Ascending aorta (tissue), 2 donors: ENCODE measurements at regions of chr3 and their contacts with region 1.

Region 1: DNA sequence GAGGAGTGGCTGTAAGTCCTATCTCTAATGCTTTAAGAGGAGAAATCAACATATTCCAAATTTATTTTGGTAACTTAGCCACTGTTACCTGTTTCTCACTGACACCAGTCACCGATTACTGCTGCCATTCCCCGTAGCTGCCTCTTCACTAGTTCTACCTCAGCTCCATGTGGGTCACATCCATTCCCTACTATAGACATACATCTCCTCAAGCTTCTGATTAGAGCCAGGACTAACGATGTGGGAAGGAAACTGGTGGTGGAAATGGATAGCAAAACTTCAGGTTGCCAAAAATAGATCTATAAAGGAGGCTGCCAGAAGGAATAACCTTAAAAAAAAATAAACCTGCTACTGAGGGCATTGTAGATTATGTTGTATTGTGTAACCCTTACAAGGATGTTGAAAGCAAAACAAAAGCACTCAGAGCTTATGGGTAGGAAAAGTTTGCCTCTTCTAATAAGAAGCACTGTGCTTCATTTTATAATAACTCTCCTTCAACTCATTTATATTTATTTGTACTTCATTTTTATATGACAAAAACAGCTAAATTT is 56.0 kb downstream of the KAT2B start:
- DNase-seq: no peak
- H3K4me3 ChIP-seq: no peak overlapping the region
- H3K27ac ChIP-seq: peak overlapping the region; percentile 28 to 64
- H3K4me1 ChIP-seq: peaks cover 0 to 18% of the 10 kb centered on the region in 2 donors
- H3K27me3 ChIP-seq: no peaks in the 10 kb centered on the region
- CTCF ChIP-seq: no peak

Region 2: DNA sequence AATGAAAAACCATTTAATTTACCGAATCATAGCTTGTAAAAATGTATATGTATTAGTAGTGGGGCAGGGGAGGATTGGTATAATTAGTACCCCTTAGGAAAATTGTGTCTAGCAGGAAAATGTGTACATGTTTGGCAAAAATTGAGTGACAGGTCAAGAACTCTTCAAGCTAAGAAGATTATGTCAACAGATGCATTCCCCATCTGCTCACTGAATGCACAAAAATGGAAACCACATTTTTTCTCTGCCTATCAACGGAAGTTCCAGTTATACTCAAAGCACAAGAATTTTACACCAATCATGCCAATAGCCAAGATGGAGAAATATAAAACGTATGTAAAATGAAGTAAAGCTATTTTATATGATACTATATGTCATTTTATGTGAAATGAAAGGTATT is 570.1 kb before region 1 on chr3:
- intact Hi-C with region 1: no loop called
- DNase-seq: no peak
- H3K4me3 ChIP-seq: no peak overlapping the region
- H3K27ac ChIP-seq: no peak overlapping the region
- H3K4me1 ChIP-seq: no peaks in the 10 kb centered on the region
- H3K27me3 ChIP-seq: no peaks in the 10 kb centered on the region
- CTCF ChIP-seq: no peak

Region 3: DNA sequence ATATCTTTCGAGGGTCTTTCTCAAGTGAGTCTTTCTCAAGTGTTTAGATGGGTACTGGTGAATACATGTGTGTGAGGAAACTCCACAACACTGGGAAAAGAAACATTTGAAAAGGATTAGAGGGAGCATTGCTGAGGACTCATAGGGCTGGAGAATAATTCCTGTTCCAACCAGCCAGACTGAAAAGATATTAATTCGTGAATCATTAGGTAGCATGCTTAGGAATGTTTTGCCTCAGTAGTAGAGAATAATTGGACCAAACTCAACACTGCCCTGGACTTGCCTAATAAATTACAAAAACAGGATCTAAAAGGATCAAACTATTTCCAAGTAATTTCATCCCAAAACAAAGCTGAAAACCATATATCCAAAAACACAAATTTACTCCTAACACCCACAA is 101.4 kb before region 1 on chr3:
- intact Hi-C with region 1: no loop called
- DNase-seq: no peak
- H3K4me3 ChIP-seq: no peak overlapping the region
- H3K27ac ChIP-seq: no peak overlapping the region
- H3K4me1 ChIP-seq: no peaks in the 10 kb centered on the region
- H3K27me3 ChIP-seq: no peaks in the 10 kb centered on the region
- CTCF ChIP-seq: no peak

Region 4: DNA sequence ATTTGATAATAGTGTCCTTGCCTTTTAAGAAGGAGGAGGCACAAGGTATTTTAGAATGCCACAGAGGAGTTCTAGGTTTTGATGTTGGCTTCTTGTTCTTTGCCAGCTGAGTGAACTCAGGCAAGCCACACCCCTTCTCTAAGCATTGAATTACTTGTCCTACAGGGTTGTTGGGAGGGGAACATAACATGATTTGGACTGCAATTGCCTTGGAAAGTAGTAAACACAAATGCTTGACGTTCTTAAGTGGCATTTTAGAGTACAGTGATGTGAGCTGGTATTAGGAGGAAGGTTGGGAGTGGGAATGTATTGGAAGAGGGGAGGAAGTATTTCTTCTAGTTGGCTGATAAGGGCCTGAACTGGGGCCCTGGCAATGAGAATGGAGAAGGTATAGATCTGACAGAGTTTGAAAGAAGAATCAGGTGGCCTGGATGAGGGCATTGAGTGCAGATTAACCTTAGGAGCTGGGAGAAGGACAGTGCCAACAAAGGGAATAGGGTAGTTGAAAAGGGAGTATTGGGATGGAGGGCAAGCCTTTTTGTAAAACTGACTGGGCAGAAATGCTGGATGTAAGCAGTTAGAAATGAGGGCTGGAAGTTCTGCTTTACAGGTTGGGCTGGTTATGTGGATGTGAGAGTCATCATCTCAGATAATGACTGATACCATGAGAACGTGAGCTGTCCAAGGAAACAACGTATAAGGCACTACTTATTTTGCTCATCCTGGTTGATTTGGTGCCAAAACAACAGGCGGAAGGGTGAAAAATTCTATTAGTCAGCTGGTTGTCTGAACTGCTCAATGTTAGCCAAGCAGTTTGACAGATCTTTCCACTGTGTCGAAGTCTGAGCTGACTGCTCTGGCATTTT is 39.3 kb before region 1 on chr3:
- intact Hi-C with region 1: loop called (anchors 5 kb)
- DNase-seq: no peak
- H3K4me3 ChIP-seq: no peak overlapping the region
- H3K27ac ChIP-seq: peak overlapping the region; percentile 73 to 78
- H3K4me1 ChIP-seq: peaks cover 15 to 31% of the 10 kb centered on the region in 2 donors
- H3K27me3 ChIP-seq: no peaks in the 10 kb centered on the region
- CTCF ChIP-seq: no peak

Region 5: DNA sequence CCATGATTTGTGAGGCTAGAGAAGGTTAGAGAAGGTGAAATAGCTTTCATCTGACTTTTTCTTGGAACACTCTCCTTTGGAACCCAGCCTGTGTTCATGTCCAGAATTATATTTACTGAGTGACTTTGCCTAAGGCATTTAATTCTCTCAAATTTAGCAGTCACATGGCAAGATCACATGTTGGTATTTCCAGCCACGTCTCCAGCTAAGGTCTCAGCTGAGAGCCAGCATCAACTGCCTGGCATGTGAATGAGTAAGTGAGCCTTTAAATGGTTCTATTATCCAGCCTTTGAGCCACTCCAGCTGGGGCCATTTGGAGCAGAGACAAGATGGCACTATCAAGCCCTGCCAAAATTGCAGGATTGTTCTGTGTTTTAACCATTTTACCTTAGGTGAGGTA is 220.0 kb after region 1 on chr3:
- intact Hi-C with region 1: loop called (anchors 5 kb)
- DNase-seq: peak; percentile 41 to 87
- H3K4me3 ChIP-seq: no peak overlapping the region
- H3K27ac ChIP-seq: peak overlapping the region; percentile 91 to 94
- H3K4me1 ChIP-seq: peaks cover 0 to 15% of the 10 kb centered on the region in 2 donors
- H3K27me3 ChIP-seq: no peaks in the 10 kb centered on the region
- CTCF ChIP-seq: no peak